Aorta (tissue), 5 donors: ENCODE measurements at regions of chr16 and their contacts with region 1.

Region 1: GRCh38 chr16:2673066-2673999 is 9.0 kb upstream of the KCTD5 start:
- DNase-seq: peak; percentile 98
- ATAC-seq: peak; percentile 99
- H3K4me3 ChIP-seq: peak overlapping the region; percentile 62 to 89
- H3K27ac ChIP-seq: peak overlapping the region in 1 of 2 donors; percentile 30
- H3K4me1 ChIP-seq: no peaks in the 10 kb centered on the region
- H3K27me3 ChIP-seq: no peaks in the 10 kb centered on the region

Region 2: DNA sequence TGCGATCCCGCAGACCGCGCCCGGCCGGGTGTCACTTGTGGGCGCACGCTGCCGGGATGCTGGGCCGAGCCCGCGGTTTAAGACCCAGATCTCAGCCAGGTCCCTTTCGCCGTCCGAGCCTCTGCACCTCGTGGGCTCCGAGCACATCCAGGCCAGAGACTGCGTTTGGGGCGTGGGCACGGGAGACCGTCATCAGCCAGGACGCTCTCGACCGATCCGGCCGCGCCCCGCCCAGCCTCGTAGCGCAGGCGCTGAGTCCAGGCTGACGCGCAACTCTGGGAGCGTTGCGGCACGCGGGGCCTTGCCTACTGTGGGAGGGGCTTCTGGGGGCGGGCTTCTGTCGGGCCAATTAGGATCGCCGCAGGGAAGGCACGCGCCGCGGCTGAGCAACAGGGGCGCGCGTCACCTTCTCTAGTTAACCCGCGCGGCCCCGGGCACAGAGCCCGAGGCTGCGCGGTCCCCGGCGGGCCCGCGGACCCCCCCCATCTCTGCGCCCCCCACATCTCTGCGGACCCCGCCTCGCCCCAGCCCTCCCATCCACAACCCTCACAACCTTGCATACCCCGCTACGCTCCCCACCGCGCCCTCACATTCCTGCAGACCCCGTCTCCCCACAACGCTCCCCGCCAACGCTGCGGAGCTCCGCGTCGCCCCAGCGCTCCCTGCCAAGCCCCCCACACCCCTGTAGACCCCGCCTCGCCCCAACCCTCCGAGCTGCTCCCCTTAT is 141.4 kb before region 1 on chr16:
- intact Hi-C with region 1: loop called in 1 of 2 experiments (anchors 10 kb)
- DNase-seq: peak; percentile 100
- ATAC-seq: peak; percentile 96
- H3K4me3 ChIP-seq: peak overlapping the region; percentile 33 to 67
- H3K27ac ChIP-seq: peak overlapping the region; percentile 20 to 92
- H3K4me1 ChIP-seq: no peaks in the 10 kb centered on the region
- H3K27me3 ChIP-seq: no peaks in the 10 kb centered on the region

Region 3: GRCh38 chr16:2603165-2604015 is 69.9 kb before region 1 on chr16:
- intact Hi-C with region 1: loop called in 1 of 2 experiments (anchors 10 kb)
- DNase-seq: peak; percentile 97 to 98
- ATAC-seq: peak; percentile 95
- H3K4me3 ChIP-seq: peak overlapping the region; percentile 43 to 70
- H3K27ac ChIP-seq: peak overlapping the region in 1 of 2 donors; percentile 1
- H3K4me1 ChIP-seq: no peaks in the 10 kb centered on the region
- H3K27me3 ChIP-seq: no peaks in the 10 kb centered on the region